ENCODE measurements at regions of chr5 and their contacts with region 1.

Region 1: DNA sequence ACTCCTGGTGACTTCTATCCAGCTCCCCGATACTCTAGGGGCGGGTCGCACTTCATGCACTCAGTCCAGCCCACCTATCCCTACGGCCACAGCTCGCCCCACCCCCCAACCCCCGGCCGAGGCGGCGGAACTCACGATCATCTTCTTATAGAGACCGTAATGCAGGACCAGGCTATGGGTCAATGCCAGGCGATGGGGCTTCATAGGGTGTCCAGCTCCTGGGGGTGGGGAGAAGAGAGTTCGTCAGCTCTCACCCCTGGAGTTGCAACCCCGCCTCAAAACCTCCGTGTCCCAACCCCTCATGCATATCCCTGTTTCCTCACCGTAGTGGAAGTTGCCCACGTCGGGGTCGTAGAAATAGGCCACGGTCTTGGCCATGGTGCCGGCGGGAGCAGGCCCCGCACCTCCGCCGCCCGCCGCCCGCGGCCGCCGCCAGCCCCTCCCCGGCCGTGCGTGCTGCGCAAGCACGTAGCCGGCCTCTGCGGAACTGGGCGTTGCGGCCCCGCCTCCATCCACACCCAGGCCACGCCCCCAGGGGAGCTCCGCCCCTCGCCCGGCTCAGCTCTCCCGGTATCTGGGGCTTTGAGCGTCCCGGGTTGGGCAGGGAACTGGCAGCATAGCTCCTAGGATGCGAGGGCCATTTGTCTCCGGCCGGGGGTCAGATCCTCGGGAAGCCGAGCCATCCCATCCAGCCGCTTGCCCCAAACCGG is at the starts of genes HDAC3 and RELL2:
- DNase-seq: peak; percentile 94
- ATAC-seq: peak; percentile 89
- H3K4me3 ChIP-seq: peak within 1 kb of the TSS; percentile 70 to 99 (median 82)
- H3K4me3 Mint-ChIP-seq: peak within 1 kb of the TSS; percentile 94
- H3K27ac ChIP-seq: peak within 1 kb of the TSS; percentile 58 to 77
- H3K27ac Mint-ChIP-seq: peak within 1 kb of the TSS; percentile 85
- H3K4me1 ChIP-seq: peaks cover 30 to 36% of the 10 kb centered on the region in 2 donors
- H3K4me1 Mint-ChIP-seq: peaks cover 39% of the 10 kb centered on the region
- H3K27me3 ChIP-seq: no peaks in the 10 kb centered on the region
- H3K27me3 Mint-ChIP-seq: no peaks in the 10 kb centered on the region
- CTCF ChIP-seq: no peak
- total RNA-seq, gene HDAC3: 85.5 and 86.9 TPM in 2 replicates
- total RNA-seq, gene RELL2: 11.6 and 12.1 TPM in 2 replicates

Region 2: DNA sequence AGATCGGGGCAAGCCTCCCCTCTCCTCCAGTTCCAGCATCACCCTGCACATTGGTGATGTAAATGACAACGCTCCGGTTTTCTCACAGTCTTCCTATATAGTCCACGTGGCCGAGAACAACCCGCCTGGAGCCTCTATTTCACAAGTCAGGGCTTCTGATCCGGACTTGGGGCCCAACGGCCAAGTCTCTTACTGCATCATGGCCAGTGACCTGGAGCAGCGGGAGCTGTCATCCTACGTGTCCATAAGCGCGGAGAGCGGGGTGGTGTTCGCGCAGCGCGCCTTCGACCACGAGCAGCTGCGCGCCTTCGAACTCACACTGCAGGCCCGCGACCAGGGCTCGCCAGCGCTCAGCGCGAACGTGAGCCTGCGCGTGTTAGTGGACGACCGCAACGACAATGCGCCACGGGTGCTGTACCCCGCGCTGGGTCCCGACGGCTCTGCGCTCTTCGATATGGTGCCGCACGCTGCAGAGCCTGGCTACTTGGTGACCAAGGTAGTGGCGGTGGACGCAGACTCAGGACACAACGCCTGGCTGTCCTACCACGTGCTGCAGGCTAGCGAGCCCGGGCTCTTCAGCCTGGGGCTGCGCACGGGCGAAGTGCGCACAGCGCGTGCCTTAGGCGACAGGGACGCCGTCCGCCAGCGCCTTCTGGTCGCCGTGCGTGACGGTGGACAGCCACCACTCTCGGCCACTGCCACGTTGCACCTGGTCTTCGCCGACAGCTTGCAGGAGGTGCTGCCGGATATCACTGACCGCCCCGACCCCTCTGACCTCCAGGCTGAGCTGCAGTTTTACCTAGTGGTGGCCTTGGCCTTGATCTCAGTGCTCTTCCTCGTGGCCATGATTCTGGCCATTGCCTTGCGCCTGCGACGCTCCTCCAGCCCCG is 247.2 kb before region 1 on chr5:
- CTCF ChIA-PET with region 1: no interaction called
- POLR2A ChIA-PET with region 1: no interaction called
- intact Hi-C with region 1: no loop called
- DNase-seq: no peak
- ATAC-seq: no peak
- H3K4me3 ChIP-seq: no peak overlapping the region
- H3K4me3 Mint-ChIP-seq: no peak overlapping the region
- H3K27ac ChIP-seq: no peak overlapping the region
- H3K27ac Mint-ChIP-seq: no peak overlapping the region
- H3K4me1 ChIP-seq: no peaks in the 10 kb centered on the region
- H3K4me1 Mint-ChIP-seq: peaks cover 3% of the 10 kb centered on the region
- H3K27me3 ChIP-seq: peaks cover 0 to 60% (median 37%) of the 10 kb centered on the region in 4 experiments
- H3K27me3 Mint-ChIP-seq: peaks cover 64% of the 10 kb centered on the region
- CTCF ChIP-seq: no peak

Region 3: DNA sequence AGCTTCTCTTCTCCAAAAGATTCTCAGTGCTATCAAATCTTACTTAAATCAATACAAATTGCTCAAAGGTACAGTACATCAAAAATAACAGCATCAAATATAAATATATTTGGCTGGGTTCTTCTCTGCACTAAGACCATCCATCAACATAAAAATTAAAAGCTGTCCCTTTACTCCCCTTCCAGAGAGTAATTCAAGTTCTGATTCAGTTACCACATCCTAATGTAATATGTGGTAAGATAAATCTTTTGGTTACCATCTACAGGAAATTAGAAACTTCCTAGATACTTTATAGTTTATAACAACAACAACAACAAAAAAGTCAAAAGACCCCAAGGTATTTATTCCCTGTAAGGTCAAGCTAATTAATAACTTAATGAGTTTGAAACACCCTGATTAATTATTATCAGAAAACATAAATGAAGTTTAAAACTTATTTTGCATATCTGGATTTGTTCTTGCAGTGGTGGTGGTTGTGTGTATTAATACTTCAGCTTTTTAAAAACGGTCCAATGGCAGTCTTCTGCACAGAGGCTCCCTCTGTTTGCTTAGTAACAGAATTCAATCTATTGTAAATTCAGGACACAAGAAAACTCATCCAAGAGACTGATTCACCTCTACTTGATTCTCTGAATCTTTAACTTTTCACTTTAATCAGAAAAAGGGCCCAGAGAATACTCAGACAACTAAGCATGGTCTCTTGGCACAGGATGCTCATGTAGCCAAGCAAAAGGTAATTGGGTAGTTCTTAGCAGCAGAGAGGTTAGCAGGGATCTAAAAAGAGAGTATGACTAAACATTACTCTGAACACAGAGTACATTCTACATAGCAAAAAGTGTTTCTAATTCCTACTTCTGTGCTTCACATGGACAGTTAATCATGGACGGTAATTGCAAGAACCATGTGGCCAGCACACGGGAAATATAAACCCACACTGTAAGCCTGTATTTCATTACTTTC is 37.9 kb before region 1 on chr5:
- CTCF ChIA-PET with region 1: interaction called, 124 read pairs
- POLR2A ChIA-PET with region 1: no interaction called
- intact Hi-C with region 1: no loop called
- DNase-seq: no peak
- ATAC-seq: no peak
- H3K4me3 ChIP-seq: no peak overlapping the region
- H3K4me3 Mint-ChIP-seq: peak overlapping the region; percentile 12
- H3K27ac ChIP-seq: peak overlapping the region in 1 of 2 donors; percentile 61
- H3K27ac Mint-ChIP-seq: no peak overlapping the region
- H3K4me1 ChIP-seq: peaks cover 23 to 40% of the 10 kb centered on the region in 2 donors
- H3K4me1 Mint-ChIP-seq: peaks cover 61% of the 10 kb centered on the region
- H3K27me3 ChIP-seq: no peaks in the 10 kb centered on the region
- H3K27me3 Mint-ChIP-seq: no peaks in the 10 kb centered on the region
- CTCF ChIP-seq: no peak

Region 4: DNA sequence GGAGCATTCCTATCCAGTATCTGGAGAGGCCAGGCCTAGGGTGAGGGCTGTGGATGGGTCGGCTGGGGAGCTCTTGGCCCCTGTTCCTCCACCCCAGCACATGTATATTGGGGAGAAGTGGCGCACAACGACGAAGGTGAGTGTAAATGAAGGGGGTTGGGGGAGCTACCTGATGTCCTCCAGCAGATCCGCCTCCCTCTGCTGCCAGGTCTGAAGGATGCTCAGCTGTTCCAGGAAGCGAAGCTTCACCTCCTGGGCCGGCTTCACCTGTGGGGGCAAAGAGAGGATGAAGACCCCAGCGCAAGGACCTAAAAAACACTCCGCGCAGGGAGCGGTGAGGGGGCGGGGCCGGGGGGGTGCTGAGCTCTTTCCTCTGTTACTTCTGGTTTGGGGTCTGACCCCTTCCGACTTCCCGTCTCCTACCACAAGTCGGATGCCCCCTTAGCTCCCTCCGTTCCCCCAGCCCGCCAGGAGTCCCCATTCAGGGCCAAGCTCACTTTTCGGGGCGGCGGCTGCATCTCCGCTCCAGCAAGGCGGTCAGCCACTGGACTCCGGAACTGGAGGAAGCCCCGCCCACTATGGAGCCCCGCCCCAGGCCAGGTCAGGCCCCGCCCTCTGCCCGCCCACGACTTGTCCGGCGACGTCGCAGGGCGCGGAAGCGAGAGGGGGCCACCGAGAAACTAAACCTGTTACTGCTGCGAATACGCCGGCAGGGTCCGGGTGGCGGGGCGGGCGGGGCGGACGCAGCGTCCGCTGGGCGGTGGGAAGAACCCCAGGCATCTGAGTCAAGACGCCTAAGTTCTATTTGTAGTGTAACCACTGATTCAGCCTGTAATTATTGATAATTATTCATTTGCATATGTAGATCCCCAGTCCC is 14.5 kb after region 1 on chr5 and contains the start of gene FCHSD1:
- CTCF ChIA-PET with region 1: interaction called, 19 read pairs
- POLR2A ChIA-PET with region 1: interaction called, 22 read pairs
- intact Hi-C with region 1: loop called (anchors 1 kb)
- DNase-seq: peak; percentile 89
- ATAC-seq: peak; percentile 100
- H3K4me3 ChIP-seq: peak within 1 kb of the TSS; percentile 53 to 84 (median 70)
- H3K4me3 Mint-ChIP-seq: peak within 1 kb of the TSS; percentile 99
- H3K27ac ChIP-seq: peak within 1 kb of the TSS; percentile 60 to 82
- H3K27ac Mint-ChIP-seq: peak within 1 kb of the TSS; percentile 98
- H3K4me1 ChIP-seq: peaks cover 14 to 22% of the 10 kb centered on the region in 2 donors
- H3K4me1 Mint-ChIP-seq: peaks cover 34% of the 10 kb centered on the region
- H3K27me3 ChIP-seq: peaks cover 0 to 8% (median 0%) of the 10 kb centered on the region in 4 experiments
- H3K27me3 Mint-ChIP-seq: peaks cover 7% of the 10 kb centered on the region
- CTCF ChIP-seq: no peak
- total RNA-seq, gene FCHSD1: 114 and 123 TPM in 2 replicates

Region 5: DNA sequence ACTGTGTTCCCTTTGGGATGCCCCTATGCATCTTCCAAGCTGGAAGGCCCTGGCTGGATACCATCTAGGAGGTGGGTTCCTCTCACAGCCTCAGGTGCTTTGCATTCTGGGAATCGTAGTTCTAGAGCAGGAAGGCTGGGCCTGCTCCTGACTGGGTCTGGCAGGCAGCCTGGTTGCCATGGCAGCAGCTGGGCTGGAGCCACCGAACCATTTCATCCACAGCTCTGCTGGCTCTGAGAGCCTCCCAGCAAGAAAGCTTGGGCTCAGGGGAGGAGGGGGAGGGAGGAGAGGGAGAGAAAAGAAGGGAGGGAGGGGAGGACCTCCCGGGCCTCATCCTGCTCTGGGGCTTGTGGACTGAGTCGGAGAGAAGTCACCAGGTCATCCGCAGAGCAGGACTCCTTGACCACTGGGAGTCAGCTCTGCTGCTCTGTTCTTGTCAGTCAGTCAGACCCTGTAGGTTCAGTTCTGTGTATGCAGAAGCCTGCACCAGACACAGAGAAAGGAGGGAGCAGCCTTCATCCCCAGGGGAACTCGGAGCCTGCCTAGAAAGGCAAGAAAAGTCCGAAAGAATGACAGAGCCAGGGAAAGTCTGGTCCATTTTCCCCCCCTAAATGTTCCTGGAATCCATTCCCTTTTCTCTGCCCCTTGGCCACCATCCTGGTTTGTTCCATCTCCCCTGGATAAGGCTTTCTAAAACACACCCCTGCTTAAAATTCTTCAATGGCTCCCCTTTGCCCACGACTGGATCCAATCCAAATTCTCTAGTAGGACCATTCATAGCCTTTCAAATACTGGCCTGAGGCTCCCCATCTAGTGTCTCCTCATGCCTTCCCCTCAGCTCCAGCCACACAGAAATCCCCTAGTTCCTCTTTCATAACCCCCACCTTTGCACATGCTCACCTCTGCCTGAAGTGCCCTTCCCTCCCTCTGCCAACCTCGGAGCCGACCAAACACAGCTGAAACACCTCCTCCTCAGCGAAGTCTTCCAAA is 110.9 kb after region 1 on chr5:
- CTCF ChIA-PET with region 1: no interaction called
- POLR2A ChIA-PET with region 1: no interaction called
- intact Hi-C with region 1: no loop called
- DNase-seq: peak; percentile 80
- ATAC-seq: peak; percentile 83
- H3K4me3 ChIP-seq: no peak overlapping the region
- H3K4me3 Mint-ChIP-seq: peak overlapping the region; percentile 61
- H3K27ac ChIP-seq: peak overlapping the region; percentile 36 to 74
- H3K27ac Mint-ChIP-seq: peak overlapping the region; percentile 84
- H3K4me1 ChIP-seq: peaks cover 20 to 21% of the 10 kb centered on the region in 2 donors
- H3K4me1 Mint-ChIP-seq: peaks cover 23% of the 10 kb centered on the region
- H3K27me3 ChIP-seq: peaks cover 0 to 36% (median 10%) of the 10 kb centered on the region in 4 experiments
- H3K27me3 Mint-ChIP-seq: peaks cover 45% of the 10 kb centered on the region
- CTCF ChIP-seq: no peak